AG04450 (cell line): ENCODE measurements at regions of chr3 and their contacts with region 1.

Region 1: DNA sequence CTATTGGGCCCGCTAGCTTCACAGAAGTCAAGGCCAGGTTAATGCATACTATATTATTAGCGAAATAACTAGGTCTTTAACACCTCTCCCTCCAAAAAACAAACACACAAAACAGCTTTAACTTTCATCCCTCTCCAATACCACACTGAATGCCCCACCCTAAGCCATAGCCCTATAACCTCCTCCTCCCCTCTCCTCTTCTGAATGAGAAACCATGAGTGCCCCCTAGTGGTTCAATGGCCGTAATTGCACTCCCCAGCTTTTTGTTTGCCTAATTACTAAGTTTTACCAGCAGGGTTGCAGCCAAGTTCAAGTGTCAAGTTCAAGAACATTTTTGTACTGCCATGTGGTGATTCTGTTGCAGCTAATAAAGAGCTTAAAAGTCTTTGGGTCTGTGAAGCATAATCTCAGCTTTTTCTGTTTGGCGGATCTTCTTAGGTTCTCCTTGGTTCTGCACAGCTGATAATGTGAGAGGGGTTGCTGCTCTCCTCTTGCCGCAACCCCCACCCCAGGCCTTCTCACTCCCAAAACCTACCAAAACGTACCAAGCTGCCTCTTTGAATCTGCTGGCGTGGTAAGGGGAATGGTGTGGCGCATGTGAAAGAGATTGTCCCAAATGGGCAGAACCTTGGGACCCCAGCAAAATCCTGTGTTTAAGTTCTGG is 57.9 kb downstream of the RPL22L1 start:
- DNase-seq: peak; percentile 61
- H3K4me3 ChIP-seq: no peak overlapping the region
- H3K27ac ChIP-seq: no peak overlapping the region
- H3K27me3 ChIP-seq: no peaks in the 10 kb centered on the region
- CTCF ChIP-seq: peak; percentile 92

Region 2: DNA sequence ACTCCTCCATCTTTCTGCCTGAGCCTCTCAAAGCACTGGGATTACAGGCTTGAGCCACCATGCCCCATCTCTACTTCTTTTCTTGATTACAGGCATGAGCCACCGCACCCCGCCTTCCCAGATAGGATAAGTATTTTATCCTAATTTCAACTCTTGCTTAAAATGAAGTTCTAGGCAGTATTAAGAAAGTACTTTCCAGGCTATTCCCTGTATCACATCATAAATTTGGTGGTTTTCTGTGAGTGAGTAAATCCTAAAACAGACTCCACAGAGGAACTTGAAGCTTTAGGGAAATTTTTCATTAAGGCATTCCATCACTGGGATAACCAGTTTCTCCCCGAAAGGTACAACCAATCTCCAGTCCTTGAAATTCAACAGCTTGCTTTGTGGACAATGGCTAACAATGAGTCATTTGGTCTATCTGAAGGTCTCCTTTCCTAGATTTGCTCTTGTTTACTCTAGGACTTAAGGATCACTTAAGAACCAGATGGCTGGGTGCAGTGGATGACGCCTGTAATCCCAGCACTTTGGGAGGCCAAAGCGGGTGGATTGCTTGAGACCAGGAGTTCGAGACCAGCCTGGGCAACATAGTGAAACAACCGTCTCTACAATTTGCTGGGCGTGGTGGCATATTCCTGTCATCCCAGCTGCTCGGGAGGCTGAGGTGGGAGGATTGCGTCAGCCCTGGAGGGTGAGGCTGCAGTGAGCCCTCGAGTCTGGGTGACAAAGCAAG is 504.2 kb before region 1 on chr3:
- CTCF ChIA-PET with region 1: interaction called, 11 read pairs
- POLR2A ChIA-PET with region 1: no interaction called
- DNase-seq: peak; percentile 23
- H3K4me3 ChIP-seq: no peak overlapping the region
- H3K27ac ChIP-seq: peak overlapping the region; percentile 21
- H3K27me3 ChIP-seq: no peaks in the 10 kb centered on the region
- CTCF ChIP-seq: no peak

Region 3: GRCh38 chr3:170431054-170431453 is 381.0 kb before region 1 on chr3:
- CTCF ChIA-PET with region 1: interaction called, 11 read pairs
- POLR2A ChIA-PET with region 1: interaction called, 7 read pairs
- DNase-seq: no peak
- H3K4me3 ChIP-seq: no peak overlapping the region
- H3K27ac ChIP-seq: no peak overlapping the region
- H3K27me3 ChIP-seq: no peaks in the 10 kb centered on the region
- CTCF ChIP-seq: peak; percentile 25

Region 4: DNA sequence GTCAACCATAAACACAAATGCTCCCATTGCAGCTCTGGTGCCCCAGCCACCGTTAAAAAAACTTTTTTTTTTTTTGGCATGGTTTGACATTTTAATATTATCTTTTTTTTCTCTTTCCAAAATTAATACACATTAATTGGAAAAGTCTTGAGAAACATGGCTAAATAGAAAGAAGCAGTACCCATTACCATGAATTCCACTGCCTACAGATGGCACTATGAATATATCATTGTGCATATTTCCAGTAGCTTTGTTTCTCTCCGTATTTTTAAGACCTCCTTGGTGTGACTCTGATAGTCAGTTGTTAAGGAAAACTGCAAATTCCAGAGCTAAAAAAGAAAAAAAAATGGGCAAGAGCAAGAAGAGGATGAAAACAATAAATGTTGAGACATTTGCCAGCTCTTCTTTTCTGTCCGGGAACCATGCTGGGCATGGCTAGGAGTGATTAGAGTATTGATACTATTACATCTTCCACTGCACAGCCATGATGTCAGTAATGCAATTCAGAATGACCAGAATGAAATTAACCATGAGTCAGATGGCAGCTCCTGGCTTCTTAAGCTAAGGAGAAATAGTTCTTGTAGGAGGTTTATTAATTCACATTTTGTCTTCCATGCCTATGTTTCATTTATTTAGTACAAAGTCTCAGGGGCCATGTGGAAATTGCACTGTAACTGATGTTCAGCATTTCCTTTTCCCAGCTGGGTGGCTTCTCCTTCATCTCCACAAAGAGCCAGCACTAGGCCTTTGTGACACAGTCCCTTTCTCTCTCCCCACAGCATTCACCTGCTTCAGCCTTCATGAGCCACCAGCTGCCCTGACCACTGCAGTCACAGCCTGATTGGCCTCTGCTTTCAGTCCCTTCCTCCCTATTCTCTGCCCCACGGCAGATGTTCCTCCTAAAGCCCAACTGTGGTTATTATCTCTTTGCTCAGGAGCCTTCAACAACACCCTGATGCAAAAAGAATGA is 258.0 kb before region 1 on chr3:
- CTCF ChIA-PET with region 1: interaction called, 17 read pairs
- POLR2A ChIA-PET with region 1: no interaction called
- DNase-seq: no peak
- H3K4me3 ChIP-seq: no peak overlapping the region
- H3K27ac ChIP-seq: no peak overlapping the region
- H3K27me3 ChIP-seq: no peaks in the 10 kb centered on the region
- CTCF ChIP-seq: no peak

Region 5: DNA sequence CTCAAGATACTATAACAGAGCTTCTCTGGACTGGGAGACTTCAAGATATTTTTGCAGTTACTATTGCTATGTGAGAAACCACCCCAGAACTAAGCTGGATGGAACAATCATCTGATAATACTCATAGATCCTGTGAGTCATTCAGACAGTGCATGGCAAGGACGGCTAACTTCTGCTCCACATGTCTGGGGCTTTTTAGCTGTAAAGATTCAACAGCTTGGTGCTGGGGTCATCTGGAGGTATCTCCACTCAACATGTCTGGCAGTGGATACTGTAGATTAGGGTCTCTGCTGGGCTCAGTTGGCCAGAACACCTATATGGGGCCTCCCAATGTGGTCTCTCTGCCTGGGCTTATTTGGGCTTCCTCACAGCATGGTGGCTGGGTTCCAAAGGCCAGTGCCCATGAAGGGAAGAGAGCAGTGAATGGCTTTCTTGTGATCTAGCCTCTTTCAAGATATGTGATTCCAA is 108.9 kb before region 1 on chr3:
- CTCF ChIA-PET with region 1: interaction called, 22 read pairs
- POLR2A ChIA-PET with region 1: no interaction called
- DNase-seq: peak; percentile 67
- H3K4me3 ChIP-seq: no peak overlapping the region
- H3K27ac ChIP-seq: peak overlapping the region; percentile 65
- H3K27me3 ChIP-seq: no peaks in the 10 kb centered on the region
- CTCF ChIP-seq: no peak

Region 6: GRCh38 chr3:170765419-170766078 is 46.5 kb before region 1 on chr3:
- CTCF ChIA-PET with region 1: interaction called, 13 read pairs
- POLR2A ChIA-PET with region 1: no interaction called
- DNase-seq: no peak
- H3K4me3 ChIP-seq: no peak overlapping the region
- H3K27ac ChIP-seq: no peak overlapping the region
- H3K27me3 ChIP-seq: no peaks in the 10 kb centered on the region
- CTCF ChIP-seq: no peak

Region 7: DNA sequence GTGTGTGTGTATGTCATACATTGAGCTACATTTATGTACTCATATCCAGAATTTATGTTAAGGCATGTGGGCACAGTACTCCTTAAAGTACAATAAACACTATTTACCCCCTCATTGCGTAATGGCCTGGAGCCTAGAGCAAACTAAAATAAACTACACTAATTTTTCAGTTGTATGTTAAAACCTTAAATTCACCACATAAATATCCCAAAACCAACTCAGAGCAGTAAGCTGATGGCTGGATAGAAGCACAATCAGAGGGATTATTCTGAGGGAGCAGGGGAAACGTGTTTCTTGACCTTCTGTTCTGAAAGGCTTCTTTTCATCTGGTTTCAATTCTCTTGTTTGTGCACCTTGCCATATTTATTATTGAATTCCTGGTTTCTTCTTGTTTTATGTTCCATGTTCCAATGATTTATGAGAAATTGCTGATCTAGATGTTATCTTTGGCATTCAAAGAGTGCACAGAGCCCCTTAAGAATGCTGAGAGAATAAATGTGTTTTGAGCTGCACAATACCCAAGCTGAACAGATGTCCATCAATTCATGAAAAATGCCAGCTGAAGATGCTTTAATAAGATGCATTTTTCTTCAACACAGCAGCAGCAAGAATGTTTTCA is 28.3 kb after region 1 on chr3:
- CTCF ChIA-PET with region 1: interaction called, 60 read pairs
- POLR2A ChIA-PET with region 1: no interaction called
- DNase-seq: no peak
- H3K4me3 ChIP-seq: no peak overlapping the region
- H3K27ac ChIP-seq: no peak overlapping the region
- H3K27me3 ChIP-seq: no peaks in the 10 kb centered on the region
- CTCF ChIP-seq: no peak